Activated CD8-positive, alpha-beta T cell treated with anti-CD3 and anti-CD28 coated beads, Interleukin-2, amount 10 ng/mL, durations not matched to agents 7 days and 5 days (primary cell): ENCODE measurements at regions of chr2 and their contacts with region 1.

Region 1: DNA sequence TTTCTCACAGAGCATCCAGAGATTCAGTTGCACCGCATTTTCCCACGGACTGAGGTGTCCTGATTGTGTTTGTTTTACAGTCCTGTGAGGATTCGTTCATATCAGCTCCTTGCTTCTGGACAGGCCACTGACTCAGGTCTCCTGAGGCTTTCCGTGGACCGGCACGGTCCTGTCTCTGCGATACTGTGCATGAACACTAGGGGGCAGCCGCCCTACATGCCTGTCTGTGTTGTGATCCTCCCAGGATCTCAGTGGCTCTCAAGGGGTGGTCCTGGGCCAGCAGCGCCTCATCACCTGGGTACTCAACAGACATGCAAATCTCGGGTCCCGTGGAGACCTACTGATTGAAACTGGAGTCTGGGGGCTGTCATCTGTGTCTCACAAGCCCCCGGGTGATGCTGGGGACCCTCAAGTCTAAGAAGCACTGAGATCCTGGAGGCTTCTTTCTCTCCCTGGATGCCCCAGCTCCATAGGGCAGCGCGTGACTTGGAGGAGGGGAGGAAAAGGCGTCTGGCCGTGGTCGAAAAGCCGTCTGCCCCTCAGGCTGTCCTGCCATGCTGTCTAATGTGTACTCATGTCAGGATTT is 28.9 kb downstream of the IL1R2 start:
- DNase-seq: peak; percentile 86
- ATAC-seq: peak; percentile 86
- H3K4me3 Mint-ChIP-seq: no peak overlapping the region
- H3K27ac Mint-ChIP-seq: no peak overlapping the region
- H3K4me1 Mint-ChIP-seq: no peaks in the 10 kb centered on the region
- H3K27me3 Mint-ChIP-seq: peaks cover 5% of the 10 kb centered on the region

Region 2: GRCh38 chr2:101967826-101968512 is 52.7 kb before region 1 on chr2:
- CTCF ChIA-PET with region 1: no interaction called
- POLR2A ChIA-PET with region 1: no interaction called
- DNase-seq: no peak
- ATAC-seq: no peak
- H3K4me3 Mint-ChIP-seq: no peak overlapping the region
- H3K27ac Mint-ChIP-seq: no peak overlapping the region
- H3K4me1 Mint-ChIP-seq: peaks cover 4% of the 10 kb centered on the region
- H3K27me3 Mint-ChIP-seq: peaks cover 5% of the 10 kb centered on the region

Region 3: GRCh38 chr2:102005989-102006885 is 14.5 kb before region 1 on chr2:
- CTCF ChIA-PET with region 1: interaction called, 34 read pairs
- POLR2A ChIA-PET with region 1: no interaction called
- DNase-seq: peak; percentile 49
- ATAC-seq: peak; percentile 57
- H3K4me3 Mint-ChIP-seq: no peak overlapping the region
- H3K27ac Mint-ChIP-seq: no peak overlapping the region
- H3K4me1 Mint-ChIP-seq: no peaks in the 10 kb centered on the region
- H3K27me3 Mint-ChIP-seq: peaks cover 2% of the 10 kb centered on the region

Region 4: GRCh38 chr2:102033031-102033749 is 12.5 kb after region 1 on chr2:
- CTCF ChIA-PET with region 1: interaction called, 10 read pairs
- POLR2A ChIA-PET with region 1: no interaction called
- DNase-seq: peak; percentile 30
- ATAC-seq: peak; percentile 63
- H3K4me3 Mint-ChIP-seq: peak overlapping the region; percentile 32
- H3K27ac Mint-ChIP-seq: peak overlapping the region; percentile 77
- H3K4me1 Mint-ChIP-seq: peaks cover 36% of the 10 kb centered on the region
- H3K27me3 Mint-ChIP-seq: peaks cover 2% of the 10 kb centered on the region

Region 5: GRCh38 chr2:102050854-102051391 is 30.2 kb after region 1 on chr2:
- CTCF ChIA-PET with region 1: no interaction called
- POLR2A ChIA-PET with region 1: no interaction called
- DNase-seq: no peak
- ATAC-seq: no peak
- H3K4me3 Mint-ChIP-seq: no peak overlapping the region
- H3K27ac Mint-ChIP-seq: no peak overlapping the region
- H3K4me1 Mint-ChIP-seq: peaks cover 10% of the 10 kb centered on the region
- H3K27me3 Mint-ChIP-seq: peaks cover 9% of the 10 kb centered on the region

Region 6: GRCh38 chr2:102235491-102235890 is 214.8 kb after region 1 on chr2:
- CTCF ChIA-PET with region 1: interaction called, 82 read pairs
- POLR2A ChIA-PET with region 1: interaction called, 5 read pairs
- DNase-seq: peak; percentile 54
- ATAC-seq: no peak
- H3K4me3 Mint-ChIP-seq: no peak overlapping the region
- H3K27ac Mint-ChIP-seq: peak overlapping the region; percentile 13
- H3K4me1 Mint-ChIP-seq: peaks cover 47% of the 10 kb centered on the region
- H3K27me3 Mint-ChIP-seq: no peaks in the 10 kb centered on the region

Region 7: DNA sequence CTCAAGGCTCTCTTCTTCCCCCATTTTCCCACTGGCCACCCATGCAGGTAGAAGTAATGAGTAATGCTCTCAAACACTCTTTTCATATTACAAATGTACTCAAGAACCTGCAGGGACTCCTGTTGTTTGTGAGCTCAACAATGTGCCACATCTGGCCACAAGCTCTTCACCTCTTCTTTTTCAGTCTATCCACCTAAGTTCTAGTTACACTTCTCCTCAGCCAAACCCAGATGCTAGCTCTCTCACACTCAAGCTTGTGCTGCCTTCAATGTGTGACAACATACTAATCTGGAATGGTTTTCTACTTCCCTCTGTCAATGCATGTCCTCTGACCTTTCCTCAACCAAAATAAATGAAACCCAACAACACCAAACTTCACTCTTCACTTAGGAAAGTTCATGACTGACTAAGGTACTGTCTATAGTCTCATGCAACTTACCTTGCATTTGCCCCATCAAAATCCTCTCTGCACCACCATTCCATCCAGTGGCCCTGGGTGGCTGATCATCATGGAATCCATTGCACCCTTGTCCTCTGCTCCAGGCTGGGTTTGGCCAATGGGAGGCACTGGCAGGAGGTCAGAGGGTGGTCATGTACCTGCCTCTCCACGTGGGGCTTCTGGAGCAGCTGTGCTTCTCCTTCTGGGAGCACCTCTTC is 329.6 kb after region 1 on chr2:
- CTCF ChIA-PET with region 1: interaction called, 11 read pairs
- POLR2A ChIA-PET with region 1: no interaction called
- DNase-seq: no peak
- ATAC-seq: no peak
- H3K4me3 Mint-ChIP-seq: no peak overlapping the region
- H3K27ac Mint-ChIP-seq: no peak overlapping the region
- H3K4me1 Mint-ChIP-seq: peaks cover 20% of the 10 kb centered on the region
- H3K27me3 Mint-ChIP-seq: peaks cover 7% of the 10 kb centered on the region